ENCODE measurements at regions of chr22 and their contacts with region 1.

Region 1: GRCh38 chr22:49052023-49052538 is 775.6 kb downstream of the BRD1 start:
- ATAC-seq: no peak
- H3K4me3 ChIP-seq: no peak overlapping the region
- H3K27ac ChIP-seq: no peak overlapping the region
- H3K4me1 ChIP-seq: no peaks in the 10 kb centered on the region

Region 2: DNA sequence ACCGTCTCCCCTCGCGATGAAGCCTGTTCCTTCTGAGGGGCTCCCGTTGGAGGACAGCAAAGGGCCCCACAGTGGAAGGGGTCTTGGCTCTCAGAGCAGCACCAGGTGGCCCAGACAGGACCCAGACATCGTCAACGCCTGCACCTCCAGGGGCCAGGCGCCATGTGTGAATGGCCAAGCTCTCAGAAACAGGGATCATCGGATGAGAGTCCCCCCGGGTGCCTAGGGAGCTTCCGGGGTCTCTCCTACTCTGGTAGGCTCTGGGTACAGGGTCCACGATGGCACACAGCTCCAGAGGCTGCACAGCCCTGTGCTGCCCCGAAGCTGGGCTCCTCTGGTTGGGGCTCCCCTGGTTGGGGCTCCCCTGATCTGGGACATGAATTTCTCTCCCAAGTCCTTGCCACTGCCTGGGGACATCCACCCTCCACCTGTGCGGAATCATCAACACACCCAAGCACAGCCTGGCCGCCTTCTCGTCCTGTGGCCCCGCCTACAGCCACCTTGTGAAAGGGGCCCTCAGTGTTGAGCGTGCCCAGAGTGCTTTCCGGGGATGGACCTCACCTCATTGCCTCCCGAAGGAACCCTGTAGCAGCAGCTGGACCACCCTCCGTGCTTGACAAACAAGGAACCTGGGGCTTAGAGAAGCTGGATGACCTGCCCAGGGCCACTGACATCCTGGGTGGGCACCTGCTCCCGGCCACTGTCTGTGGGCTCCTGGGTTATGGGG is 153.4 kb before region 1 on chr22:
- in situ Hi-C with region 1: no loop called
- ATAC-seq: no peak
- H3K4me3 ChIP-seq: no peak overlapping the region
- H3K27ac ChIP-seq: no peak overlapping the region
- H3K4me1 ChIP-seq: no peaks in the 10 kb centered on the region

Region 3: DNA sequence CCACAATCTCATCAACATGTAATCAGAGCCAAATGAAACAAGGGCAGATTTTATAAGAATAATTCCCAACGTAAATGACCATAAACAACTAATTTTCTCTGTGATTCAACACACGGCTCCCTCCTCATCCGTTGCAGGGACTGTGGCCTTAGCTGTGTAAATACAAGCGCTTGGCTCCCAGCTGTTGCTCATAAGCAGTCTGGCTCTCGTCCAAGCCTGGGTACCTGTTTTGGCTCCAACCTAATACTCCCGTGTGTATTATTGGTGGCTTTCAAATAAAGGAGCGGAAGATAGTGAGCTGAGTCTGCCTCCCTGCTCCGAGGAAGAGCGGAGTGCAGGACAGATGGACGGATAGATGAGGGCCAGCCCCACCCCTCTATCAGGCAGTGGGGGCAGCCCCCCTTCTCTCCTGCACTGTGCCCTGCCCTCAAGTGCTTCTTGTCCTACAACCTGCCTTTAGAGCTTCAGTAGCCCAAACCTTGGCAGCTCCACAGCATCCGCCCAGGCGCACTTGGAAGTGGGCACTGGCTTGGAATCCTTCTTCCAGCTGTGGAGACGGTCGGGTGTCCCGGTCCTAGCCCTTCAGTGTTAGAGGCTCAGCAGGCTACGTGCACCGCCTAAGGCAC is 104.7 kb after region 1 on chr22:
- in situ Hi-C with region 1: loop called in 1 of 9 experiments (anchors 25 kb)
- ATAC-seq: no peak
- H3K4me3 ChIP-seq: no peak overlapping the region
- H3K27ac ChIP-seq: no peak overlapping the region
- H3K4me1 ChIP-seq: no peaks in the 10 kb centered on the region

Region 4: DNA sequence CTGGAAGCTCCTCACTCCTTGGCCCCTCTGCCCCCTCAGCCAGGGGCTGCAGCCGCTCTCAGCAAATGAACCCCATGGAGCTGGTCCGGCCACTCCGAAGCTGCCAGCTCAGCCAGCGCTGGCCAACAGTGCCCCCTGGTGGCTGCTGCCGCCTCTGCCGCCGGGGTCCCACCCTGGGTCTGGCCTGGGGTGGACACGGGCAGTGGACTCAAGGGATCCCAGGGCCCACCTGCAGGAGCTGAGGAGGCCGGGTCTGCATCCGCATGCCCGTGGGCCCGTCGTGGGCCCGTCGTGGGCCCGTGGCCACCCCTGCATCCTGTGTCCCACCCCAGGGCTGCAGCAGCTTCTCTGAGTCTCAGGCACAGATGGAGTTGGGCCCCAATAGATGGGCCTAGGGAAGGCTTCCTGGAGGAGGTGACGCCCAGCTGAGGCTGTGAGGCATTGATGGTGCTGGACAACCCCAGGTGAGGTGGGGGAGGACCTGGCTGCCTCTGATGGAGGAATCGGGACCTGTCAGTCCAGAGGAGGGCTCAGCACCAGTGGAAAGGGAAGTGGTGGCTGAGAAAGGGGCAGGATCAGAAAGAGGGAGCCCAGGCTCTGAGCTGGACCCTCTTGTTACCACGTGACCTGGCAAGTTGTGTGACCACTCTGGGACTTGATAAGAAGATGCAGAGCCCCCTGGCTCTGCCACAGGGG is 253.3 kb after region 1 on chr22:
- in situ Hi-C with region 1: loop called in 1 of 9 experiments (anchors 25 kb)
- ATAC-seq: peak in 7 of 8 experiments; percentile 22 to 99 (median 92)
- H3K4me3 ChIP-seq: peak overlapping the region in 1 of 5 donors; percentile 3
- H3K27ac ChIP-seq: no peak overlapping the region
- H3K4me1 ChIP-seq: no peaks in the 10 kb centered on the region

Region 5: GRCh38 chr22:49532869-49533765 is 481.0 kb after region 1 on chr22:
- in situ Hi-C with region 1: no loop called
- ATAC-seq: no peak
- H3K4me3 ChIP-seq: no peak overlapping the region
- H3K27ac ChIP-seq: no peak overlapping the region
- H3K4me1 ChIP-seq: no peaks in the 10 kb centered on the region